ENCODE measurements at regions of chr9 and their contacts with region 1.

Region 1: DNA sequence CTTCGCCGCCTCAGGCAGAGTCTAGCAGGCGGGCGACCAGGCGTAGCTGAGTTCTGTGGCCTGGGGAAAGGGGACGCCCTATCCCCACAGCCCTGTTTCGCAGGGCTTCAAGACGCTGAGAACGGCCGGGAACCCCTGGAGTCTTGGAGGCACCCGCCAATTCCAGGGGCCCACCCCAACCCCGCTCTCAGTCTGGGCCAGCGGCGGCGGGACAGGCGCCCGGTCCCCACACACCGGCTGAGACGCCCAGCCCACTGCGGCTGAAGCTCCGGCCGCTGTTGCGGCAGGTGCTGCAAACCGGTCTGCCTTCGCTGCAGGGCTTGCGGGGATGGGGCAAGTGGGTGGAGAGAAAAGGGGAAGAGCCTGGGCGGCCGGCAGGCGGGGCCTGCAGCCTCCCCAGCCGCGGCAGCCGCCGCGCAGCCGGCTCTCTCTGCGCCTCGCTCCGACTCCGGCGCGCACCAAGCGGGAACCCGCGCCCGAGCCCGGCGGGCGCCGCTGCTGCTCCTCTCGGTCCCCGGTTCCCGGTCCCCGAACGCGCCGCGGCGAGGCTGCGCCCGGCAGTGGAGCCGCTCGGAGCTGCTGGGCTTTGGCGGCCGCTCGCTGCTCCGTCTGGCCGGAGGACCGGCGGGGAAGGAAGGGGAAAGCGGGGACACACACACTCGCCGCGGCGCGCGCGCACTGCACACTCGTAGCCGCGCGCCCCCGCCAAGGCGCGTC is at the start of gene PIP5K1B:
- DNase-seq: peak; percentile 55 to 73
- H3K4me3 ChIP-seq: peak within 1 kb of the TSS; percentile 29
- H3K4me1 ChIP-seq: no peaks in the 10 kb centered on the region
- H3K27me3 ChIP-seq: peaks cover 55% of the 10 kb centered on the region

Region 2: DNA sequence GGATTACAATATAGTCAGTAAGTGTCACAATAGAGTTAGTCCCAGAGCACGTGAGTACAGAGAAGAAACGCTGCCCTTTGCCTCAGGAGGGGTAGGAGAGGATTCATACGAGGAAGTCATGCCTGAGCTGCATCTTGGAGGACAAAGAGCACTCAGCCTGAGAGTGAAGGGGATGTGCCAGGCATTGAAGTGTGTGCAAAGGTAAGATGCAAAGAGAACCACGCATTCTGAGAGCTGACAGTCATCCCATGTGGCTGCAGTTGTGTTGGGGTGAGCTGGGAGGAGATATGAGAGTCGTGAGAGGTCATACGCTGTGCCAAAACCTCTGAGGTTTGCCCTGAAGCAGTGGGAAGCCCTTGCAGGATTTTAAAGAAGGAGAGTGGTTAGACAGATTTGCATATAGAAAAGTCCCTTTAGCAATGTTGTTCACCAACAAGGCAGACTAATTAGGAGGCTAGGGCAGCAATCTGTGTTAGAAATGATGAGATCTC is 97.6 kb after region 1 on chr9:
- in situ Hi-C with region 1: no loop called
- DNase-seq: no peak
- H3K4me3 ChIP-seq: no peak overlapping the region
- H3K4me1 ChIP-seq: peaks cover 4% of the 10 kb centered on the region
- H3K27me3 ChIP-seq: peaks cover 68% of the 10 kb centered on the region

Region 3: GRCh38 chr9:68844631-68845612 is 139.9 kb after region 1 on chr9:
- in situ Hi-C with region 1: loop called (anchors 25 kb)
- DNase-seq: peak; percentile 23 to 74
- H3K4me3 ChIP-seq: no peak overlapping the region
- H3K4me1 ChIP-seq: no peaks in the 10 kb centered on the region
- H3K27me3 ChIP-seq: no peaks in the 10 kb centered on the region; the same call in 1 of the 2 replicates

Measured in HAP-1 (cell line).